ENCODE measurements at regions of chr3 and their contacts with region 1.

Region 1: DNA sequence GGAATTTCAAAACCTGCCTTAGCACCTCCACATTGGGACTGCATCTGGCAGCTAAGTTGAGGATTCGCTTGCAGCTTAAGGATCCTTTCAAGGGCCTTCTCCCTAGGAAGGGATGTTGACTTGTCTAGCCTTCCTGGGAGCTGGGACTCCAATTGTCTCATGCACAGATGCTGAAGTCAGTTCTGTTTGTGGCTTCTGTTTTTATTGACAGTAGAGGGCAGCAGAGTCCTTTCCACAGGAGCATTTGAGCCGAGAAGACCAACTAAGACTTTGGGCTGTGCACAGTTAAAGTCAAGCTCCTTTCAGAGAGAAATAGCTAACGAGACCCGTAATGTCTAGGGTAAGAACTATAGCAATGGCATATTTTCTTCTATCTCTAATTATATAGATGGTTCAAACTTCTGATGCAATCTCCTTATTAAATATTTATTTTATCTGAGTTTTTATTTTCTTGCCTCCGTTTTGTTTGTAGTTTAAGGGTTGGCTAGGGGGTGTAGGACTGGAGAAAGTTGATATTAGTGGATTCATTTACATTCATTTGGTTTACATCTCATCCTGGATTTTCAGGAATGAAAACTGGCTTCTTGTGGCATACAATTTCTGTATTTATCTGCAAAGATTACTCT is 59.7 kb upstream of the KBTBD8 start:
- DNase-seq: peak; percentile 36
- H3K4me3 ChIP-seq: no peak overlapping the region
- H3K27ac ChIP-seq: no peak overlapping the region
- H3K4me1 ChIP-seq: no peaks in the 10 kb centered on the region
- H3K27me3 ChIP-seq: no peaks in the 10 kb centered on the region
- CTCF ChIP-seq: peak; percentile 74
- EP300 ChIP-seq: no peak
- RAD21 ChIP-seq: peak; percentile 80

Region 2: GRCh38 chr3:66675366-66675765 is 263.1 kb before region 1 on chr3:
- CTCF ChIA-PET with region 1: no interaction called
- POLR2A ChIA-PET with region 1: no interaction called
- DNase-seq: no peak
- H3K4me3 ChIP-seq: no peak overlapping the region
- H3K27ac ChIP-seq: no peak overlapping the region
- H3K4me1 ChIP-seq: no peaks in the 10 kb centered on the region
- H3K27me3 ChIP-seq: no peaks in the 10 kb centered on the region
- CTCF ChIP-seq: no peak
- EP300 ChIP-seq: no peak
- RAD21 ChIP-seq: no peak

Region 3: GRCh38 chr3:66957367-66957766 is 18.9 kb after region 1 on chr3:
- CTCF ChIA-PET with region 1: interaction called, 19 read pairs
- POLR2A ChIA-PET with region 1: no interaction called
- DNase-seq: no peak
- H3K4me3 ChIP-seq: no peak overlapping the region
- H3K27ac ChIP-seq: no peak overlapping the region
- H3K4me1 ChIP-seq: no peaks in the 10 kb centered on the region
- H3K27me3 ChIP-seq: no peaks in the 10 kb centered on the region
- CTCF ChIP-seq: no peak
- EP300 ChIP-seq: no peak
- RAD21 ChIP-seq: no peak